CD8-positive, alpha-beta T cell (primary cell): ENCODE measurements at regions of chr4 and their contacts with region 1.

Region 1: GRCh38 chr4:89110986-89111832 is at the start of gene TIGD2:
- DNase-seq: peak; percentile 78 to 96 (median 88)
- ATAC-seq: peak; percentile 94
- H3K4me3 ChIP-seq: peak within 1 kb of the TSS; percentile 75 to 80
- H3K4me3 Mint-ChIP-seq: peak within 1 kb of the TSS; percentile 89
- H3K27ac ChIP-seq: peak within 1 kb of the TSS; percentile 63 to 66
- H3K27ac Mint-ChIP-seq: peak within 1 kb of the TSS; percentile 79
- H3K4me1 ChIP-seq: peaks cover 16% of the 10 kb centered on the region
- H3K4me1 Mint-ChIP-seq: peaks cover 24% of the 10 kb centered on the region
- H3K27me3 ChIP-seq: no peaks in the 10 kb centered on the region
- H3K27me3 Mint-ChIP-seq: no peaks in the 10 kb centered on the region
- CTCF ChIP-seq: peak; percentile 68
- total RNA-seq, gene TIGD2: 2.4 to 2.9 TPM

Region 2: GRCh38 chr4:87220094-87220822 is 1891.0 kb before region 1 on chr4 and contains the start of gene KLHL8:
- CTCF ChIA-PET with region 1: no interaction called
- POLR2A ChIA-PET with region 1: no interaction called
- intact Hi-C with region 1: loop called in 1 of 2 experiments (anchors 5 kb)
- DNase-seq: peak; percentile 75 to 94 (median 85)
- ATAC-seq: peak; percentile 90
- H3K4me3 ChIP-seq: peak within 1 kb of the TSS; percentile 91 to 99
- H3K4me3 Mint-ChIP-seq: peak within 1 kb of the TSS; percentile 94
- H3K27ac ChIP-seq: peak within 1 kb of the TSS; percentile 86 to 92
- H3K27ac Mint-ChIP-seq: peak within 1 kb of the TSS; percentile 91
- H3K4me1 ChIP-seq: peaks cover 9% of the 10 kb centered on the region
- H3K4me1 Mint-ChIP-seq: peaks cover 18% of the 10 kb centered on the region
- H3K27me3 ChIP-seq: no peaks in the 10 kb centered on the region
- H3K27me3 Mint-ChIP-seq: no peaks in the 10 kb centered on the region
- CTCF ChIP-seq: peak; percentile 39
- total RNA-seq, gene KLHL8: 8.2 to 8.7 TPM

Region 3: GRCh38 chr4:88456757-88457306 is 654.4 kb before region 1 on chr4 and contains the start of gene HERC5:
- CTCF ChIA-PET with region 1: no interaction called
- POLR2A ChIA-PET with region 1: no interaction called
- intact Hi-C with region 1: loop called (anchors 2 to 5 kb)
- DNase-seq: peak; percentile 83 to 96 (median 91)
- ATAC-seq: peak; percentile 95
- H3K4me3 ChIP-seq: peak within 1 kb of the TSS; percentile 79 to 87
- H3K4me3 Mint-ChIP-seq: peak within 1 kb of the TSS; percentile 100
- H3K27ac ChIP-seq: peak within 1 kb of the TSS; percentile 63 to 74
- H3K27ac Mint-ChIP-seq: peak within 1 kb of the TSS; percentile 100
- H3K4me1 ChIP-seq: peaks cover 13% of the 10 kb centered on the region
- H3K4me1 Mint-ChIP-seq: peaks cover 33% of the 10 kb centered on the region
- H3K27me3 ChIP-seq: no peaks in the 10 kb centered on the region
- H3K27me3 Mint-ChIP-seq: no peaks in the 10 kb centered on the region
- CTCF ChIP-seq: no peak
- total RNA-seq, gene HERC5: 13.2 to 13.5 TPM

Region 4: GRCh38 chr4:88823058-88823919 is 287.9 kb before region 1 on chr4:
- CTCF ChIA-PET with region 1: no interaction called
- POLR2A ChIA-PET with region 1: no interaction called
- intact Hi-C with region 1: loop called (anchors 2 to 5 kb)
- DNase-seq: peak; percentile 36 to 94 (median 61)
- ATAC-seq: peak; percentile 95
- H3K4me3 ChIP-seq: peak overlapping the region; percentile 42 to 51
- H3K4me3 Mint-ChIP-seq: peak overlapping the region; percentile 93
- H3K27ac ChIP-seq: peak overlapping the region; percentile 52 to 83
- H3K27ac Mint-ChIP-seq: peak overlapping the region; percentile 94
- H3K4me1 ChIP-seq: peaks cover 5% of the 10 kb centered on the region
- H3K4me1 Mint-ChIP-seq: peaks cover 29% of the 10 kb centered on the region
- H3K27me3 ChIP-seq: peaks cover 0 to 2% of the 10 kb centered on the region in 2 experiments
- H3K27me3 Mint-ChIP-seq: no peaks in the 10 kb centered on the region
- CTCF ChIP-seq: no peak

Region 5: DNA sequence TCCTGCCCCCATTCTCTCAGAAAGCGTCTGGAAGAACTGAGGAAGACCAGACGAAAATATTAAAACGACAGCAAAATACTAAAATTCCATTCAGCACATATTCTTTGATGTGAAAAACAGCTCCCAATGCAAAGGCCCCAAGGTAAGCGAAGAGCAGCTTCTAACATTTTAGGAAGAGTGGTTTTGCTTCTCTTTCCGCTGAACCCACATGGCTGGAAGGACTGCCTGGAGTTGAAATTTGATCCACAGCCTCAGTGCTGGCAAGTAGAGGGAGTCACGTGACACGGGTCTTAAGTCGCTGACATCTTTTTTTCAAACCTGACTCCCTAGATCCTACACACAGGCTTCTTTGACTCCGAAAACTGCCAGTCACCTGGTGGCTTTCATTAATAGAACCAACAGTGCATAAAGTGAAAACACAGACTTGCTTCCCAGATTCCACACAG is 54.2 kb before region 1 on chr4 and contains the start of gene FAM13A:
- CTCF ChIA-PET with region 1: no interaction called
- POLR2A ChIA-PET with region 1: no interaction called
- intact Hi-C with region 1: no loop called
- DNase-seq: peak in 2 of 9 experiments; percentile 13 to 38
- ATAC-seq: no peak
- H3K4me3 ChIP-seq: peak within 1 kb of the TSS in 1 of 2 experiments; percentile 15
- H3K4me3 Mint-ChIP-seq: peak within 1 kb of the TSS; percentile 16
- H3K27ac ChIP-seq: no peak within 1 kb of the TSS
- H3K27ac Mint-ChIP-seq: no peak within 1 kb of the TSS
- H3K4me1 ChIP-seq: no peaks in the 10 kb centered on the region
- H3K4me1 Mint-ChIP-seq: peaks cover 7% of the 10 kb centered on the region
- H3K27me3 ChIP-seq: no peaks in the 10 kb centered on the region
- H3K27me3 Mint-ChIP-seq: peaks cover 4% of the 10 kb centered on the region
- CTCF ChIP-seq: no peak
- total RNA-seq, gene FAM13A: 3.9 to 4.3 TPM

Region 6: DNA sequence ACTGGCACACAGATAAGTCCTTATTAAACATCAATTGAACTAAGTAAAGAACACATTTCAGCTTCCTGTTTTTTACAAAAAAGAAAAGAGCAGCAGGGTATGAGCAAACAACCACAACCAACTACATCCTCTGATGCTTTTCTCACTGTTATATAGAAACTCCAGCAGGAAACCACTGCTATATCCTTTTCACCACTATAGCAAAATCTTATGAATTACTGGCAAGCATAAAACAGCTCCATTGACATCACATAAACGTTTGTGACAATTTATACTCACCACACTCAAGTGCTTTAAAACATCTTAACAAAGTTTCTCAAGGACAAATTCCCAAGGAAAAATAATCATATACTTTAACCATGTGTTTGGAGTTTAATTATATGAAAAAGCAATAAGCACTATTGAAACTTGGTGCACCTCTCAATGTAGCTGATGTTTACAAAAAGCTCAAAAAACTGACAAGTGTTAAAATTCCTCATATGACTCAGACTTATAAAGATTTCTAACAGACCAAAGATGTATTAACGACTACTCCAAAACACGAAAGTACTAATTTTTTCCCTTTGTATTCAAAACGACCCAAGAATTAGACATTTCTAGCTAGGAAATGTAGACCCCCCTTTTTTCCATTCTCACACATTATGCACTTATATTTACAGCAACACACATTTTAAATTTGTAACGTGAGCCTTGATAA is 183.5 kb after region 1 on chr4:
- CTCF ChIA-PET with region 1: no interaction called
- POLR2A ChIA-PET with region 1: no interaction called
- intact Hi-C with region 1: loop called (anchors 5 to 10 kb)
- DNase-seq: peak in 2 of 9 experiments; percentile 78 to 88
- ATAC-seq: peak; percentile 74
- H3K4me3 ChIP-seq: peak overlapping the region in 1 of 2 experiments; percentile 21
- H3K4me3 Mint-ChIP-seq: peak overlapping the region; percentile 60
- H3K27ac ChIP-seq: peak overlapping the region; percentile 42 to 82
- H3K27ac Mint-ChIP-seq: peak overlapping the region; percentile 89
- H3K4me1 ChIP-seq: peaks cover 80% of the 10 kb centered on the region
- H3K4me1 Mint-ChIP-seq: peaks cover 89% of the 10 kb centered on the region
- H3K27me3 ChIP-seq: no peaks in the 10 kb centered on the region
- H3K27me3 Mint-ChIP-seq: no peaks in the 10 kb centered on the region
- CTCF ChIP-seq: no peak